Activated CD4-positive, alpha-beta memory T cell treated with anti-CD3 and anti-CD28 coated beads, Interleukin-2, amount 10 ng/mL, durations not matched to agents 7 days and 5 days (primary cell): ENCODE measurements at regions of chr1 and their contacts with region 1.

Region 1: DNA sequence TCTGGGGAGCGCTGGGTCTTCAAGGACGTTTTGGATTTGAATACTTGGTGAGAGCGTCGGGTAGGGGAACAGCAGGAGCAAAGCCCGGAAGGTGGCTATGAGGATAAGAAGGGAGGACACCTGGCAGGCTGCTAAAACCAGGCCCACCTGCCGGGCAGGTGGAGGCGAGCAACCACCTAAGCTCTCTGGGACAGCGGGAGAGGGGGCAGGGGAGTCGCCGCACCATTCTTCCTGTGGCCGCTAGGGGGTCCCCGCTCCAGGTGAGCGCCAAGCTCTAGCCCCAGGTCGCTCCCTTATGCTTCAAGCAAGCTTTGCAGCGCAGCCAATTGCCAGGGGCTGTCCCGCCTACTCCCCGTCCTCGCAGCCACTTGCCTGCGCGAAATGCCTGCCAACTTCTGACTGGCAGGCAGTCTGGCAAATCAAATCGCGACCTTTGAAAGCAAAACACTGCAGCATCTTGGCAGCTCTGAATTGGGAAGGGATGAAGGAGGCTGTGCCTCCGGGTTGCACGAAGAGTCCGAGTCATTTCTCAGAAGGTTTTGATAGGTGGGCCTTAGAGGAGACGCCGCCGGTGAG is at the start of gene NIPAL3:
- DNase-seq: peak; percentile 99
- H3K4me3 Mint-ChIP-seq: peak within 1 kb of the TSS; percentile 98
- H3K27ac Mint-ChIP-seq: peak within 1 kb of the TSS; percentile 77
- H3K4me1 Mint-ChIP-seq: peaks cover 61% of the 10 kb centered on the region
- H3K27me3 Mint-ChIP-seq: no peaks in the 10 kb centered on the region
- total RNA-seq, gene NIPAL3: 51.8 to 53.5 TPM

Region 2: DNA sequence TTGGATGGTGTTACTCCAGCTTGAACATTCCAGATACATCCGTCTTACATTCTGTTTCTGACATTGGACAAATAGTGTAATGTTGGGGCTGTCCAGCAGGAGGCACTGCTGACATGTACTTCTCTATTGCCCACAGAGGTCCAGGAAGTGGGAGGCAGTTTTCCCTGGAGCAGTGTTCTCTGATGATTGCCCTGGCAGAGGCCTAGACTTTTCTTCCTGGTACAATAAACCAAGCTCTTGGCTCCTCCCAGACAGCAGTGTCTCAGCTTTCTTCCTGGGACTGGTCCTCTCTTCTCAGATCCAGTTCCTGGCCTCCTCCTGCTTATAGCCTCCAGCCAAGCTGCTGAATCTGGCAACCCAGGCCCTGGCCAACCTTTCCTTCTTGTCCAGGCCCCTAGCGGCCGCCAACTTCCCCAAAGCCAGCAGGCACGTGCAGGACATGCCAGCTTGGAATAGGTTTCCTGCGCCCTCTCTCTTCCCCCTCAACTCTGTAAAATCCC is 213.4 kb before region 1 on chr1:
- CTCF ChIA-PET with region 1: interaction called, 10 read pairs
- POLR2A ChIA-PET with region 1: interaction called, 3 read pairs
- DNase-seq: peak; percentile 65
- H3K4me3 Mint-ChIP-seq: no peak overlapping the region
- H3K27ac Mint-ChIP-seq: no peak overlapping the region
- H3K4me1 Mint-ChIP-seq: peaks cover 21% of the 10 kb centered on the region
- H3K27me3 Mint-ChIP-seq: peaks cover 6% of the 10 kb centered on the region

Region 3: GRCh38 chr1:24425441-24425840 is 10.0 kb after region 1 on chr1:
- CTCF ChIA-PET with region 1: interaction called, 10 read pairs
- POLR2A ChIA-PET with region 1: no interaction called
- DNase-seq: no peak
- H3K4me3 Mint-ChIP-seq: no peak overlapping the region
- H3K27ac Mint-ChIP-seq: no peak overlapping the region
- H3K4me1 Mint-ChIP-seq: peaks cover 9% of the 10 kb centered on the region
- H3K27me3 Mint-ChIP-seq: no peaks in the 10 kb centered on the region

Region 4: GRCh38 chr1:24502709-24503058 is 87.3 kb after region 1 on chr1 and contains the start of gene RCAN3:
- CTCF ChIA-PET with region 1: interaction called, 89 read pairs
- POLR2A ChIA-PET with region 1: interaction called, 172 read pairs
- DNase-seq: peak; percentile 92
- H3K4me3 Mint-ChIP-seq: peak within 1 kb of the TSS; percentile 99
- H3K27ac Mint-ChIP-seq: peak within 1 kb of the TSS; percentile 99
- H3K4me1 Mint-ChIP-seq: peaks cover 71% of the 10 kb centered on the region
- H3K27me3 Mint-ChIP-seq: no peaks in the 10 kb centered on the region
- total RNA-seq, gene RCAN3: 59.3 to 62.6 TPM

Region 5: GRCh38 chr1:24541711-24542346 is 126.4 kb after region 1 on chr1:
- CTCF ChIA-PET with region 1: interaction called, 28 read pairs
- POLR2A ChIA-PET with region 1: interaction called, 32 read pairs
- DNase-seq: peak; percentile 47
- H3K4me3 Mint-ChIP-seq: no peak overlapping the region
- H3K27ac Mint-ChIP-seq: peak overlapping the region; percentile 81
- H3K4me1 Mint-ChIP-seq: peaks cover 66% of the 10 kb centered on the region
- H3K27me3 Mint-ChIP-seq: no peaks in the 10 kb centered on the region

Region 6: DNA sequence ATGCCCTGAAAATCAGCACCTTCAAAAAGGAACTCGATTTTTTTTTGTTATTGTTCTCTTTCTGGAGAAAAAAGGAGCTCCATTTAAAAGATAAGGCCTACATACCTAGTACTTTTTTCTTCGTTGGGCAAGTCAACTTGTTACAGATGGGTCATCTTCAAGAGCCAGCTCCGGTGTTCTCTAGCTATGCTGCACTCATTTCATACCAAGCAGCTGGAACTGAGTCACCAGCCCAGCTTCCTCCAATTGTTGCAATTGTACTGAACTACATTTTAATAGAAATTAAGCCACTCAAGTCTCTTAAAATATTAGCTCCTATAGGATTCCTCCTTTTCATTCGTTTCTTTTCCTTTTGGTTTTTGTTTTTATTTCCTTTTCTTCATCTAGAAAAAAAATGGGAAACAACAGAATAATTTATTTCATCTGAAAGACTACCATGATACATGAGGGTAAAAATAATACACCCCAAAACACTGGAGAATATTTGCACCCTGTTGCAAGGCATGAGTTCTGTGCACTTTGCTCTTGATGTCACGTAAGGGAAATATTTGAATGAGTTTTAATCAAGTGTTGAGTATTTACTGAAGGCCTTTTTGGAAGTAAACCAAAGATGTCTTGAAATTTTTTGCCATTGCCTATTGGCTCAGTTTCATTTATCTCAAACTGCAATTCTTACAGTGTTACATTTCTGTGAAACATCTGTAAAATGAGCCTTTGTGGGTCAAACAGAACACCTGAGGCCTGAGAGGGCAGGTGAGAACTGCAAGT is 390.3 kb after region 1 on chr1:
- CTCF ChIA-PET with region 1: no interaction called
- POLR2A ChIA-PET with region 1: no interaction called
- DNase-seq: no peak
- H3K4me3 Mint-ChIP-seq: no peak overlapping the region
- H3K27ac Mint-ChIP-seq: no peak overlapping the region
- H3K4me1 Mint-ChIP-seq: peaks cover 2% of the 10 kb centered on the region
- H3K27me3 Mint-ChIP-seq: no peaks in the 10 kb centered on the region